Activated CD4-positive, alpha-beta memory T cell treated with anti-CD3 and anti-CD28 coated beads for 36 hours (primary cell): ENCODE measurements at regions of chr4 and their contacts with region 1.

Region 1: GRCh38 chr4:146522098-146522868 is 543 bp upstream of the SLC10A7 start:
- DNase-seq: peak; percentile 88
- H3K4me3 Mint-ChIP-seq: no peak overlapping the region
- H3K27ac Mint-ChIP-seq: peak overlapping the region; percentile 57
- H3K4me1 Mint-ChIP-seq: peaks cover 19% of the 10 kb centered on the region
- H3K27me3 Mint-ChIP-seq: no peaks in the 10 kb centered on the region

Region 2: GRCh38 chr4:145481164-145481941 is 1040.9 kb before region 1 on chr4 and contains the start of gene SMAD1:
- CTCF ChIA-PET with region 1: no interaction called
- POLR2A ChIA-PET with region 1: no interaction called
- intact Hi-C with region 1: loop called (anchors 10 kb)
- DNase-seq: peak; percentile 53
- H3K4me3 Mint-ChIP-seq: peak within 1 kb of the TSS; percentile 66
- H3K27ac Mint-ChIP-seq: no peak within 1 kb of the TSS
- H3K4me1 Mint-ChIP-seq: peaks cover 8% of the 10 kb centered on the region
- H3K27me3 Mint-ChIP-seq: peaks cover 38% of the 10 kb centered on the region
- total RNA-seq, gene SMAD1: 2.8 to 2.9 TPM

Region 3: GRCh38 chr4:146132445-146132844 is 389.8 kb before region 1 on chr4:
- CTCF ChIA-PET with region 1: no interaction called
- POLR2A ChIA-PET with region 1: no interaction called
- intact Hi-C with region 1: loop called (anchors 5 kb)
- DNase-seq: peak; percentile 86
- H3K4me3 Mint-ChIP-seq: no peak overlapping the region
- H3K27ac Mint-ChIP-seq: peak overlapping the region; percentile 26
- H3K4me1 Mint-ChIP-seq: peaks cover 17% of the 10 kb centered on the region
- H3K27me3 Mint-ChIP-seq: peaks cover 12% of the 10 kb centered on the region

Region 4: DNA sequence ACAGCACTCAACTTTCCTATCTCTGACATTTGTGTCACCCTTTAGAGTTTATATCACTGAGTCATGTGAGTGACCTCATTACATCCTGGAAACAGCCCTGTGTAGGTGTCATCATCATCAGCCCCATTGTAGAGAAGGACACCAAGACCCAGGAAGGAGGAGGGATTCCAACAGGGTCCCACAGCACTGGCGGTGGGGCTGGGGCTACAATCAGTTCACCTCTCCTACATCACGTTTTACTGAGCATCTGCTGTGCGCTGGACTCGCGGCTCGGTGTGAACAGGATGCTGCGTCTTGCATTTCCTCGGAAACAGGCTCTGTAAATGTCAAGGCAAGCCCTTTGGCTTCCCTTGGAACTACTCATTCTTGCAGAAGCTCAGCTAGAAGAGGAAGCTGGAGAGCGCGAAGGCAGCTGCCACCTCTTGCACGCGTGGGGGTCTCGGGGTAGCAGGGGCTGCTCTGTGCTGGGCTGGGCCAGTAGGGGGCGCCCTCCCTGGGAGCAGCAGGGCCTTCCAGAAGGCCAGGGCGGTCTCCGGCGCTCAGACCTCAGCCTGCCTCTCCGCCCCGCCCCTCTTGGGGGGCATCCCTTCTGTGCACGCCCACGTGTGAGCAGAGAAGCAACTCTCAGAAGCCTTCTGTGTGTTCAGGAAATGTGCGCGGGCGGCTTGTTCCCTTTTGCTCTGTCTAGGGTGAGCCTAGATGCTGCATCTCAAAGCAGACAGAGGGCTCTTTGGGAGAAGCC is 279.0 kb before region 1 on chr4:
- CTCF ChIA-PET with region 1: no interaction called
- POLR2A ChIA-PET with region 1: no interaction called
- intact Hi-C with region 1: loop called (anchors 1 kb)
- DNase-seq: peak; percentile 83
- H3K4me3 Mint-ChIP-seq: peak overlapping the region; percentile 65
- H3K27ac Mint-ChIP-seq: peak overlapping the region; percentile 80
- H3K4me1 Mint-ChIP-seq: peaks cover 36% of the 10 kb centered on the region
- H3K27me3 Mint-ChIP-seq: peaks cover 2% of the 10 kb centered on the region

Region 5: GRCh38 chr4:146381263-146381872 is 140.9 kb before region 1 on chr4:
- CTCF ChIA-PET with region 1: no interaction called
- POLR2A ChIA-PET with region 1: no interaction called
- intact Hi-C with region 1: no loop called
- DNase-seq: no peak
- H3K4me3 Mint-ChIP-seq: no peak overlapping the region
- H3K27ac Mint-ChIP-seq: no peak overlapping the region
- H3K4me1 Mint-ChIP-seq: no peaks in the 10 kb centered on the region
- H3K27me3 Mint-ChIP-seq: no peaks in the 10 kb centered on the region

Region 6: GRCh38 chr4:146458594-146458993 is 63.7 kb before region 1 on chr4:
- CTCF ChIA-PET with region 1: no interaction called
- POLR2A ChIA-PET with region 1: no interaction called
- intact Hi-C with region 1: loop called (anchors 1 kb)
- DNase-seq: no peak
- H3K4me3 Mint-ChIP-seq: peak overlapping the region; percentile 46
- H3K27ac Mint-ChIP-seq: peak overlapping the region; percentile 89
- H3K4me1 Mint-ChIP-seq: peaks cover 17% of the 10 kb centered on the region
- H3K27me3 Mint-ChIP-seq: no peaks in the 10 kb centered on the region

Region 7: GRCh38 chr4:146534178-146534577 is 11.9 kb after region 1 on chr4:
- CTCF ChIA-PET with region 1: no interaction called
- POLR2A ChIA-PET with region 1: no interaction called
- intact Hi-C with region 1: no loop called
- DNase-seq: no peak
- H3K4me3 Mint-ChIP-seq: no peak overlapping the region
- H3K27ac Mint-ChIP-seq: no peak overlapping the region
- H3K4me1 Mint-ChIP-seq: no peaks in the 10 kb centered on the region
- H3K27me3 Mint-ChIP-seq: peaks cover 5% of the 10 kb centered on the region

Region 8: GRCh38 chr4:146674829-146675570 is 152.7 kb after region 1 on chr4:
- CTCF ChIA-PET with region 1: no interaction called
- POLR2A ChIA-PET with region 1: no interaction called
- intact Hi-C with region 1: no loop called
- DNase-seq: no peak
- H3K4me3 Mint-ChIP-seq: no peak overlapping the region
- H3K27ac Mint-ChIP-seq: no peak overlapping the region
- H3K4me1 Mint-ChIP-seq: no peaks in the 10 kb centered on the region
- H3K27me3 Mint-ChIP-seq: peaks cover 4% of the 10 kb centered on the region

Region 9: DNA sequence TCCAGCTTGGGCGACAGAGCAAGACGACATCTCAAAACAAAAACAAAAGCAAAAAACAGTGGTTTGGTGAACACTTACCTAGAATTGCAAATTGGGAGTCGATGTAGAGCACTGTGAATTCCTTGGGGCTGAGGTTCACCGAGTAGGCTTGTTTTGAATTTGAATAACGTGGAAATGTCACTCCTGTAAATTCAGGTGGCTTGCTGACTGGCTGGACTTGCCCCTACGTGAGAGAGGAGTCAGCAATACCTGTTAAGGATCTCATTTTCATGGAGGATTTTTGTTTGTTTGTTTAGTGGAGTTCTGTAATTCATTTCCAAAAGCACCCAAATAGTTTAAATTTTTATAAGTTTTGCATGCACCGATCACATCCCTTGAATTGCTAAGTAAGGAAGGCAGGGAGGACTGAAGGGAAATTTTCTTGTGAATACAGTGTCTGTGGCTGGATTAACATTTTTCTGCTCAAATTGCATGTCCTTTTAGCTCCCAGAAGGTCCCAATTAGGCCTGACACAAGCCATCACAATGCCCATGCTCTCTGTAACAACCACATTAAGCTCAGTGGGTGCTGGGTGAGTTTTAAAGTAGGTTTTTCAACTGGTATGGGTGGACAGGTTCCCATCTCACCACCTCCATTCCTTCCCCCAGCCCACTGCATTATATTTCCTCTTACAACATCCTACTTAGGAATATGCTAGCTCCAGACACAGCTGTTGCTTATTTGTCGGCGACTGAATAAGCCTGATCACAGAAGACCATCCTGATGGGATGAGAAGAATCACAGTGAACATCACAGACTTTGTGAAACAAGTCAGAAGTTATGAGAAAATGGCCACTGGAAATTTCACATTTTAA is 481.9 kb after region 1 on chr4:
- CTCF ChIA-PET with region 1: no interaction called
- POLR2A ChIA-PET with region 1: no interaction called
- intact Hi-C with region 1: no loop called
- DNase-seq: no peak
- H3K4me3 Mint-ChIP-seq: no peak overlapping the region
- H3K27ac Mint-ChIP-seq: no peak overlapping the region
- H3K4me1 Mint-ChIP-seq: no peaks in the 10 kb centered on the region
- H3K27me3 Mint-ChIP-seq: no peaks in the 10 kb centered on the region